ENCODE measurements at regions of chr1 and their contacts with region 1.

Region 1: GRCh38 chr1:29849038-29849750 is 612.9 kb downstream of the PTPRU start:
- DNase-seq: peak; percentile 17
- ATAC-seq: peak; percentile 57; the same call in 1 of the 2 replicates
- H3K4me3 ChIP-seq: no peak overlapping the region
- H3K27ac ChIP-seq: no peak overlapping the region
- H3K4me1 ChIP-seq: no peaks in the 10 kb centered on the region
- H3K27me3 ChIP-seq: peaks cover 1% of the 10 kb centered on the region; the same call in 1 of the 2 replicates
- CTCF ChIP-seq: peak; percentile 50
- POLR2A ChIP-seq: no peak
- RAD21 ChIP-seq: peak; percentile 52

Region 2: GRCh38 chr1:29513357-29513756 is 335.8 kb before region 1 on chr1:
- CTCF ChIA-PET with region 1: no interaction called
- POLR2A ChIA-PET with region 1: no interaction called
- dilution Hi-C with region 1: no loop called
- in situ Hi-C with region 1: no loop called
- intact Hi-C with region 1: loop called (anchors 1 kb)
- DNase-seq: peak; percentile 70
- ATAC-seq: peak; percentile 93
- H3K4me3 ChIP-seq: no peak overlapping the region
- H3K27ac ChIP-seq: no peak overlapping the region
- H3K4me1 ChIP-seq: no peaks in the 10 kb centered on the region
- H3K27me3 ChIP-seq: peaks cover 9% of the 10 kb centered on the region
- CTCF ChIP-seq: peak; percentile 85
- POLR2A ChIP-seq: 0 out of 2 replicates have a peak, but pooled peaks have one; percentile 29
- RAD21 ChIP-seq: peak; percentile 97

Region 3: DNA sequence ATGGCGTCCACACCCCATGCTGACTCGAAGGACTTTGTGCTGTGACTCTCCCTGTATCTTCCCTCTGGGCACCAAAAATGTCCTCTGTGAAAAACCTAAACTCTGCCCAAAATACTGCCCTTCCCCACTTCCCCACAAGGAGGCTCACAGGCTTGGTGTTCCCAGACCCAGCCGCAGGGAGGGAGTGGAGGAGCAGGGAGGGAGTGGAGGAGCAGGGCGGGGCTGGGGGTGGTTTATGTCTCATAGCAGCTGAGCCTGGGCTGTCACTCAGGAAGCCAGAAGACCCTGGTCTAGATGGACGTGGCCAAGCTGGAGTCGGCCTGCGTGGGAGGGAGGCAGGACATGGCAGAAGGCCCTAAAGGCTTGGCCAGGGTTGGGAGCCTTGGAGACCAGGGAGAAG is 151.2 kb before region 1 on chr1:
- CTCF ChIA-PET with region 1: no interaction called
- POLR2A ChIA-PET with region 1: no interaction called
- dilution Hi-C with region 1: no loop called
- in situ Hi-C with region 1: no loop called
- intact Hi-C with region 1: loop called (anchors 2 kb)
- DNase-seq: peak; percentile 59
- ATAC-seq: peak; percentile 97
- H3K4me3 ChIP-seq: no peak overlapping the region
- H3K27ac ChIP-seq: no peak overlapping the region
- H3K4me1 ChIP-seq: no peaks in the 10 kb centered on the region
- H3K27me3 ChIP-seq: no peaks in the 10 kb centered on the region; the same call in 1 of the 2 replicates
- CTCF ChIP-seq: peak; percentile 69
- POLR2A ChIP-seq: no peak
- RAD21 ChIP-seq: peak; percentile 66